ENCODE measurements at regions of chr2 and their contacts with region 1.

Region 1: GRCh38 chr2:118088051-118089024 is at the start of gene INSIG2:
- DNase-seq: peak; percentile 96
- H3K4me3 Mint-ChIP-seq: peak within 1 kb of the TSS; percentile 89
- H3K27ac Mint-ChIP-seq: peak within 1 kb of the TSS; percentile 85
- H3K4me1 Mint-ChIP-seq: peaks cover 21% of the 10 kb centered on the region
- H3K27me3 Mint-ChIP-seq: peaks cover 2% of the 10 kb centered on the region
- total RNA-seq, gene INSIG2: 35.0 to 40.2 TPM

Region 2: DNA sequence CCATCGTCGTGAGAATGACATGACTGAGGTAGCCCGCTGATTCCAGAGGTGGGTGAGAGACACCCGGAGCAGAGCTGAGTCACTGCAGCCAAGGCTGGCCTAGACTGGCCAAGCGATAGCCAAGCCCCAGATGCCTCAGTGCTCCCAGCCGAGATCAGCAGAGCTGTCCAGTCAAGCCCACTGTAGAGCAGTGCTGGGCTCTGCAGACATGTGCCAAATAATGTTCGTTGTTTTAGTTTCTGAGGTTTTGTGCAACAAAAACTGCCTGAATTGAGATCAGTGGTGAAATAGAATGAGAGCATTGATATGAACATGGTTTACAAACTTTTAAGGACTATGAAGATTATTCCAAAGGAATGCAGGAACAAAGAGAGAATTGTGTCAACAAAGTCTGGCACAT is 42.0 kb after region 1 on chr2:
- CTCF ChIA-PET with region 1: no interaction called
- POLR2A ChIA-PET with region 1: no interaction called
- intact Hi-C with region 1: loop called (anchors 1 kb)
- DNase-seq: no peak
- H3K4me3 Mint-ChIP-seq: no peak overlapping the region
- H3K27ac Mint-ChIP-seq: no peak overlapping the region
- H3K4me1 Mint-ChIP-seq: peaks cover 7% of the 10 kb centered on the region
- H3K27me3 Mint-ChIP-seq: peaks cover 17% of the 10 kb centered on the region

Region 3: DNA sequence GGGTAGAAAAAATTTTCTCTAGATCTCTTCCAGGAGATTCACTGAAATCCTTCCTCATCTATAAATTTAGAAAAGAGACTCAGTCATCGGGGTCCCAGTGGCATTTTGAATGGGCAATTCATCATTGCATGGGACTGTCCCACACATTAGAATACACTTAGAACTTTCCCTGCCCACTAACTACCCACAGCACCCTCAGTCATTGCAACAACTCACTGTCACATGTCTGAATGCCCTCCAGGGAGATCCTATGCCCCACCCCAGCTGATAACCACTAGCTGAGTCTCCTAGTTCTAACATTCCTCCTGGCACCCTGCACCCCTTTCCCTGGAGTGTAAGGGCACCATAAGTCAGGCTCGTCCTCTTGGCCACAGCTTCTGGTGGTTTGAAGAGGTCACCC is 89.5 kb after region 1 on chr2:
- CTCF ChIA-PET with region 1: no interaction called
- POLR2A ChIA-PET with region 1: interaction called, 6 read pairs
- intact Hi-C with region 1: loop called (anchors 2 kb)
- DNase-seq: peak; percentile 39
- H3K4me3 Mint-ChIP-seq: no peak overlapping the region
- H3K27ac Mint-ChIP-seq: peak overlapping the region; percentile 78
- H3K4me1 Mint-ChIP-seq: peaks cover 19% of the 10 kb centered on the region
- H3K27me3 Mint-ChIP-seq: peaks cover 4% of the 10 kb centered on the region

Region 4: GRCh38 chr2:118186110-118186857 is 97.9 kb after region 1 on chr2:
- CTCF ChIA-PET with region 1: no interaction called
- POLR2A ChIA-PET with region 1: interaction called, 4 read pairs
- intact Hi-C with region 1: loop called (anchors 1 kb)
- DNase-seq: peak; percentile 92
- H3K4me3 Mint-ChIP-seq: peak overlapping the region; percentile 93
- H3K27ac Mint-ChIP-seq: peak overlapping the region; percentile 94
- H3K4me1 Mint-ChIP-seq: peaks cover 11% of the 10 kb centered on the region
- H3K27me3 Mint-ChIP-seq: no peaks in the 10 kb centered on the region

Region 5: GRCh38 chr2:118309946-118310680 is 221.8 kb after region 1 on chr2:
- CTCF ChIA-PET with region 1: no interaction called
- POLR2A ChIA-PET with region 1: no interaction called
- intact Hi-C with region 1: loop called (anchors 1 kb)
- DNase-seq: peak; percentile 78
- H3K4me3 Mint-ChIP-seq: peak overlapping the region; percentile 79
- H3K27ac Mint-ChIP-seq: peak overlapping the region; percentile 88
- H3K4me1 Mint-ChIP-seq: peaks cover 8% of the 10 kb centered on the region
- H3K27me3 Mint-ChIP-seq: peaks cover 2% of the 10 kb centered on the region

Measured in activated CD4-positive, alpha-beta memory T cell treated with anti-CD3 and anti-CD28 coated beads for 36 hours (primary cell).